Cardiac septum (tissue), 1 donor: ENCODE measurements at regions of chr10 and their contacts with region 1.

Region 1: DNA sequence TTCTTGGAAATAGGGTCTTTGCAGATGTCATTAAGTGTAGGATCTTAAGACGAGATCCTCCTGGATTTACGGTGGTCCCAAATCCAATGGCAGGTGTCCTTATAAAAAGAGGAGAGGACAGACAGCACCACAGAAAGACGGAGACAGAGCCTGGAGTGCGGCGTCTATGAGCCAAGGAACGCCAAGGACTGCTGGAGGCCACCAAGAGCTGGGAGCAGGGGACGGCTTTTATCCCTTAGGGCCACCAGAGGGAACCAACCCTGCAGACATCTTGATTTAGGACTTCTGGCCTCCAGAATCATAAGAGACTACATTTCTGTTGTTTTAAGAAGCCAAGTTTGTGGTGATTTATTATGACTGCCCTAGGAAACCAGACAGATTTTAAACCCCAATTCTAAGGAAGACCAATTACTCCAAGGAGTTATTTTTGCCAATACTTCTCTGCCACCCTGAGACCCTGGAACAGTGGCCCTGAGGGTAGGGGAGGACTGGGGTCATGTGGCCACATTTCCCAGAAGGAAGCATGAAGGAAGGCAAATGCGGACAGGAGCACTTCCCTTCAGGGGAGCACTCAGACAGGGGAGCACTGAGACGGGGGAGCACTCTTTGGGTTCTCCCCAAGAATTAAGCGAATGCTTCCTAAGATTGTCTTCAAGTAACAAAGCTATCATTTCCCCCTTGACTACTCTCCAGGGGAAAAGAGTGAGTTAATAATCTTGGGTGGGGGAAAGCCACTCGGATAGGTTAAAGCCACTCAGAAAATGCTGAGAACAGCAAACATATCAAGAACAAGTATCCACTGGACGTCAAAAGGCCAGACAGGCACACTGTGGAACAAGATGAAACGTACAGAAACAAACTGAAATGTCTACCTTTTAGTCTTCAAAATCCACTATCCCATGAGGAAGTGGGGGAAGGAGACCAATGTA is 67.5 kb downstream of the CHST15 start:
- DNase-seq: no peak

Region 2: GRCh38 chr10:124076148-124076733 is 50.3 kb after region 1 on chr10:
- intact Hi-C with region 1: no loop called
- DNase-seq: no peak

Region 3: GRCh38 chr10:124267231-124267885 is 241.4 kb after region 1 on chr10:
- intact Hi-C with region 1: loop called (anchors 10 kb)
- DNase-seq: no peak